Activated CD4-positive, alpha-beta T cell treated with anti-CD3 and anti-CD28 coated beads, Interleukin-2, amount 10 ng/mL, durations not matched to agents 7 days and 5 days (primary cell): ENCODE measurements at regions of chr1 and their contacts with region 1.

Region 1: GRCh38 chr1:78640462-78640861 is 9.2 kb upstream of the IFI44 start:
- DNase-seq: no peak
- H3K4me3 Mint-ChIP-seq: no peak overlapping the region
- H3K27ac Mint-ChIP-seq: peak overlapping the region; percentile 42
- H3K4me1 Mint-ChIP-seq: peaks cover 74% of the 10 kb centered on the region
- H3K27me3 Mint-ChIP-seq: no peaks in the 10 kb centered on the region

Region 2: DNA sequence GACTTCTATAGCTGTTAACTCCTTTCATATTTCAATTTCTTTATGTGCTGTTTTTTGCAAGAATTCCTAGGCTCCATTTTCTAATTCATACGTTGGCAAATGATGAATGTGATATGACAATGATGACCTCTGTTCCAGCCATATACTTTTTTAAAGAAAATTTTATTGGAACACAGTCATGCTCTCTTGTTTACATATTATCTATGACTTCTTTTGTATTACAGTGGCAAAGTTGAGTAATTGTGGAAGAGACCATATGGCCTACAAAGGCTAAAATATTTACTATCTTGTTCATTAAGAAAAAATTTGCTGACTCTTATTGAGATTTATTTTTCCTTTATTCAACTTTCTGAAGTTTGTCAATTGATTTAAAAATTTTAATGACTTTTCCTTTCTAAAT is 13.1 kb before region 1 on chr1:
- CTCF ChIA-PET with region 1: interaction called, 12 read pairs
- POLR2A ChIA-PET with region 1: interaction called, 7 read pairs
- DNase-seq: no peak
- H3K4me3 Mint-ChIP-seq: peak overlapping the region; percentile 66
- H3K27ac Mint-ChIP-seq: no peak overlapping the region
- H3K4me1 Mint-ChIP-seq: peaks cover 58% of the 10 kb centered on the region
- H3K27me3 Mint-ChIP-seq: no peaks in the 10 kb centered on the region